ENCODE measurements at regions of chr11 and their contacts with region 1.

Region 1: GRCh38 chr11:9137293-9138132 is 46.1 kb upstream of the SCUBE2 start:
- DNase-seq: peak; percentile 67 to 85 (median 80)
- H3K4me3 ChIP-seq: no peak overlapping the region
- H3K27ac ChIP-seq: peak overlapping the region in 51 of 59 donors; percentile 12 to 82 (median 57)
- H3K27me3 ChIP-seq: no peaks in the 10 kb centered on the region
- CTCF ChIP-seq: peak; percentile 53 to 96 (median 88)

Region 2: DNA sequence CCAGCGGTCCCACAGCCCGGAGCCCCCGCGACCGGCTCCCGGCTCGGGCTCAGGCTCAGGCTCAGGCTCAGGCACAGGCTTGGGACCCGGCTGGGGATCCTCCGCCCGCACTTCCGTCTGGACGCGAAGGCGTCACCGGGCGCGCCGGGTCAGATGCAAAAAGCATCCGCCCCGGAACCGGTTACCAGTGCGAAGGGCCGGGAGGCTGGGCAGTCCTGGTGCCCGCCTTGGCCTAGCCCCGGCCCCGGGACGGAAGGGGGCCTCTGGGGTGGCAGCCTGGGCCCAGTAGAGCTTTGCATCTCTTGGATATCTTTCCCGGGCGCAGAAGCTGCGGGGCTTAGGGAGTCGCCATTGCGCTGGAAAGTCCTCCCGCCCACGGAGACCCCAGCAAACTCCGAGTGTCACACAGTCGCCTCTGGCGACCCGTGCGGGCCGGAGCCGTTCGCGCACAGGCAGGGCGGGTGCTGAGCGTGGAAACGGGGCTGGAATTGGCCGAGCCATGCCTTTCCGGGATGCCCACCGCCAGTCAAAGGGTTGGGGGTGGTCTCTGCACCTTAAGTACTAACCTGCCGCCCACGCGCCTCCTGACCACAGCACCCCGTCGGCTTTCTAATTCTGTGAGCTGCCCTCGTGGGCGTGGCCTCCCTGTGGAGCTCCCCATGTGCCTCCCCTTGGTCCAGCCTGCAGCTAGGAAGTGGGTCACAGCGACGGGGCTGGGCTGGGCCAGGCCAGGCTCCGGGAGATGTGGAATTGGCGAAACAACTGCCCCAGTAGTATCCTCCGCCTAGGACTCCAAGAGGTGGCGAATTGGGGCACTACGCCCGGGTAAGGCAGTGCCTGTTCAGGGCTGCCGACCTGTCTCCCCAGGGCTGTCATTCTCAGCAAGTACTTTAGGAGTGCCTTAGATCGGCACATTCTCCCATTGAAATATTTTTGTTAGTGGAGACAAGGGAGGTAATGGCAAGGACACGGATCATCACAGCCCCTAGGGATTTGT is 172.9 kb before region 1 on chr11 and contains the start of gene TMEM9B:
- intact Hi-C with region 1: loop called in 1 of 2 experiments (anchors 10 kb)
- DNase-seq: peak; percentile 73 to 94 (median 90)
- H3K4me3 ChIP-seq: peak within 1 kb of the TSS; percentile 70 to 98 (median 91)
- H3K27ac ChIP-seq: peak within 1 kb of the TSS; percentile 56 to 97 (median 91)
- H3K27me3 ChIP-seq: no peaks in the 10 kb centered on the region
- CTCF ChIP-seq: peak in 13 of 56 donors; percentile 3 to 48 (median 17)
- total RNA-seq, gene TMEM9B: 33.7 to 59.4 (median 47.3) TPM

Measured in dorsolateral prefrontal cortex (tissue), 120 donors.